PC-3 (cell line): ENCODE measurements at regions of chr14 and their contacts with region 1.

Region 1: GRCh38 chr14:72665259-72665658 is 228.6 kb downstream of the DPF3 start:
- DNase-seq: peak; percentile 99
- ATAC-seq: peak; percentile 83
- H3K4me3 ChIP-seq: peak overlapping the region; percentile 39
- H3K27ac ChIP-seq: peak overlapping the region; percentile 86
- H3K4me1 ChIP-seq: peaks cover 41% of the 10 kb centered on the region
- H3K27me3 ChIP-seq: no peaks in the 10 kb centered on the region
- CTCF ChIP-seq: no peak

Region 2: GRCh38 chr14:72638021-72638420 is 27.2 kb before region 1 on chr14:
- CTCF ChIA-PET with region 1: no interaction called
- POLR2A ChIA-PET with region 1: interaction called, 6 read pairs
- intact Hi-C with region 1: loop called (anchors 1 kb)
- DNase-seq: peak; percentile 91
- ATAC-seq: peak; percentile 50
- H3K4me3 ChIP-seq: no peak overlapping the region
- H3K27ac ChIP-seq: peak overlapping the region; percentile 90
- H3K4me1 ChIP-seq: peaks cover 51% of the 10 kb centered on the region
- H3K27me3 ChIP-seq: no peaks in the 10 kb centered on the region
- CTCF ChIP-seq: no peak

Region 3: DNA sequence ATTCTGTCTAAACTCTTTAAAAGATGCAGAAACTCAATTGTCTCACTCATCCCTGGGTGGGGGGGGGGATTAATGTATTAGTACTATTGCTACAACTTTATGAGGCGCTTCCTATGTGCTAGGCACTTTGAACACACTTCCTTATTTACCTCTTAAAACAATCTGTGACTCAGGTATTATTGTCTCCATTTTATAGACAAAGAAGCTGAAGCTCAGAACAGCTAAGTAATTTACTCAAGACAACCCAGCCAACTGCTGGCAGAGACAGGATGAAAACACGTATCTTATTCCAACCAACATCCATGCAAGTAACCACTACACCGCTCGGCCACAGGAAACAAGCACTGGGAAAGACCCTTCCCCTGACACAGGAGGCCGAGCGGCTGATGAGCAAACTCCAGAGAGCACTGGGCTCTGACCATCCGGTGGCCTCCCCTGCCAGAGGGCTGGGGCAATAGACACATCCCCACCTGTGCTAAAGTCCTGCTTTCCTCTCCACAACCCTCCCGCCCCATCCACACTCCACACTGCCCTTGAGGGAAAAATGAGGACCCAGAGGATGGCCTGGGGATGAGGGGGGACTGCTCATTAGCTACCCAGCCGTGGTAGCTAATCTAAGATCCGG is 15.5 kb before region 1 on chr14:
- CTCF ChIA-PET with region 1: interaction called, 4 read pairs
- POLR2A ChIA-PET with region 1: interaction called, 3 read pairs
- intact Hi-C with region 1: loop called (anchors 1 kb)
- DNase-seq: peak; percentile 86
- ATAC-seq: peak; percentile 58
- H3K4me3 ChIP-seq: 0 out of 2 replicates have a peak overlapping the region, but pooled peaks have one; percentile 2
- H3K27ac ChIP-seq: peak overlapping the region; percentile 76
- H3K4me1 ChIP-seq: peaks cover 70% of the 10 kb centered on the region
- H3K27me3 ChIP-seq: no peaks in the 10 kb centered on the region
- CTCF ChIP-seq: no peak

Region 4: DNA sequence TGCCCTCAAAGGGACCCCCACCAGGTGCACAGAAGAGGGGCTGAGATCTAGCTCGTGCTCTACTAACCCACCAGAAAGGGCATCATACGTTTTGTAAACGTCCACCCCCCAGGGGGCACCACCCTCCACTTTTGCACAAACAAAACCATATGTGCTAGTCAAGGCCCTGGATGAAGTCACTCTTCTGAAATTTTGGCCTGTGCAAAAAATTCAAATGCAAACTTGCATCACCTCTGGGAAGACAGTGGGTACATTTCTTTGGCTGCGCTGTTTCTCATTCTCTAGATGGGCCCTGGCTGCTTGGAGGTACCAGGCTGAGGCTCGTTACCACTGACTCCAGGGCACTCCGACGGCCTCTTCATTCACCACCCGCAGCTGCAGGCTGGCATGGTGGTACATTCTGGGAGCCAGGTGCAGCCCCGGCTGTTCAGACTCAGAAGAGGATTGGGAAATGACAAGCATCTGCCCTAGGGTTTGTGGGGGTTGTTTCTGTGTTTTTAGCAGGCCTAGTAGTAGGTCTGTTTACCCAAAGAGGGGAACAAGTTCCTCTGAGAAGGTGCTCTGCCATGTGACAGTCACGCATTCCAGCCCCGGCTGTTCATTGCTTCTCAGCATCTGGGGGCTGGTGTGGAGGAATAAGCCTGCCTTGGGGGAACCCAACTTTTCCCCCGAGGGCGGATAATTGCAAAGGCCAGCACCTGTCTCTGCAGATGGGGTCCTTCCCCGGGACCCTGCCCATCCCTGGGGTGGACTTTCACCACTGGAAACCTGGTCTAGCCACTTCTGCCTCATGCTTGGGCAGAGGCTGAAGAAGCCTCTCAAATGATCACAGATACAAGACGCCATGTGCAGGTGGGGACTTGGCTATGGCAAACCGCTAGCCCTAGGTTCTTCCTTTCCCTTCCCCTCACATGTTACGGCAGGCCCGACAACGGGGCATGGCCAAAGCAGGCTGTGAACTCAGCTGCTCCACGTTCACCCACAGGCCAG is 81.0 kb after region 1 on chr14:
- CTCF ChIA-PET with region 1: no interaction called
- POLR2A ChIA-PET with region 1: no interaction called
- intact Hi-C with region 1: loop called (anchors 1 kb)
- DNase-seq: peak; percentile 48
- ATAC-seq: peak; percentile 41
- H3K4me3 ChIP-seq: no peak overlapping the region
- H3K27ac ChIP-seq: peak overlapping the region; percentile 67
- H3K4me1 ChIP-seq: peaks cover 27% of the 10 kb centered on the region
- H3K27me3 ChIP-seq: no peaks in the 10 kb centered on the region
- CTCF ChIP-seq: peak; percentile 36

Region 5: GRCh38 chr14:72904840-72905561 is 239.7 kb after region 1 on chr14:
- CTCF ChIA-PET with region 1: no interaction called
- POLR2A ChIA-PET with region 1: no interaction called
- intact Hi-C with region 1: loop called (anchors 1 kb)
- DNase-seq: peak; percentile 90
- ATAC-seq: peak; percentile 76
- H3K4me3 ChIP-seq: no peak overlapping the region
- H3K27ac ChIP-seq: no peak overlapping the region
- H3K4me1 ChIP-seq: peaks cover 31% of the 10 kb centered on the region
- H3K27me3 ChIP-seq: no peaks in the 10 kb centered on the region
- CTCF ChIP-seq: peak; percentile 100

Region 6: DNA sequence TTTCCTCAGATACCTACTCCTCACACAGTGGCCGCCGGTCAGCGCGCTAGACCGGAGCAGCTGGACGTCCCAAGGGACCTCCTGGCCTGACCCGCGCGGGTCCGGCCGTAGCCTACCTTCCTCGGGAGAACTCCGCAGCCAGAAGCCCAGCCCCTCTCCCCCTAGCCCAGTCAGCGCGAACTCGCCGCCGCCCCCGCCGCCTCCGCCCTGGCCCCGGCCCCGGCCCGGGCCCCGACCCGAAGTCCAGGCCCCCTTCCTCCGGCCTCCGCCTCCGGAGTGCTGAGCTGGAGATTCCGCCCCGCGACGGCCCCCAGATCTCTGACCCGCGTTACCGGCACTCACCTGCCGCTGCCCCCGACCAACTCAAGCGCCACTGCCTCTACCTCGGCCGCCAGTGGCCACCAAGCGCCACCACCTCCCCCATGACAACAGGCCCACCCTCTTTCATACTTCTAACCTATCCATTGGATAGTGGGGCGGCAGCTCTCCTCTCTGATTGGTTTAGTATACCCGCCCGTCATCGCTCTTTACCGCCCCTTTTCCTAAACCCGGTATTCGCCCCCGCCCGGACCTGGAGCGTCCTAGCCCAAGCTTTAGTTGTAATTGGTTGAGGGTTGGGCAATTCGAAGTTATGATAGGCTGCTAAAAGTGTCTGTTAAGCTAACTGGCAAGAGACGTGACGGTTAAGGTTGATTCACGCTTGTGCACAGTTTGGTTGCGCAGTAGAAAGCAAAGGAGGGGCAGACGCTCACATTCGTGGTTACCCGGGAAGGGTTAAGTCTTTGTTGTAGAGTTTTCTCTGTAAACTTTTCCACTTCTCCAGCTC is 793.1 kb after region 1 on chr14 and contains the start of gene NUMB:
- CTCF ChIA-PET with region 1: no interaction called
- POLR2A ChIA-PET with region 1: no interaction called
- intact Hi-C with region 1: loop called (anchors 5 kb)
- DNase-seq: peak; percentile 100
- ATAC-seq: peak; percentile 94
- H3K4me3 ChIP-seq: peak within 1 kb of the TSS; percentile 90
- H3K27ac ChIP-seq: peak within 1 kb of the TSS; percentile 11; the same call in 1 of the 2 replicates
- H3K4me1 ChIP-seq: peaks cover 37% of the 10 kb centered on the region
- H3K27me3 ChIP-seq: no peaks in the 10 kb centered on the region
- CTCF ChIP-seq: no peak
- total RNA-seq, gene NUMB: 22.2 and 26.8 TPM in 2 replicates